ENCODE measurements at regions of chr5 and their contacts with region 1.

Region 1: GRCh38 chr5:160165137-160166068 is 46.2 kb upstream of the PWWP2A start:
- DNase-seq: peak; percentile 86
- H3K4me3 ChIP-seq: no peak overlapping the region
- H3K27ac ChIP-seq: peak overlapping the region; percentile 89
- H3K4me1 ChIP-seq: peaks cover 44% of the 10 kb centered on the region
- H3K27me3 ChIP-seq: no peaks in the 10 kb centered on the region
- CTCF ChIP-seq: no peak
- POLR2A ChIP-seq: peak; percentile 73

Region 2: DNA sequence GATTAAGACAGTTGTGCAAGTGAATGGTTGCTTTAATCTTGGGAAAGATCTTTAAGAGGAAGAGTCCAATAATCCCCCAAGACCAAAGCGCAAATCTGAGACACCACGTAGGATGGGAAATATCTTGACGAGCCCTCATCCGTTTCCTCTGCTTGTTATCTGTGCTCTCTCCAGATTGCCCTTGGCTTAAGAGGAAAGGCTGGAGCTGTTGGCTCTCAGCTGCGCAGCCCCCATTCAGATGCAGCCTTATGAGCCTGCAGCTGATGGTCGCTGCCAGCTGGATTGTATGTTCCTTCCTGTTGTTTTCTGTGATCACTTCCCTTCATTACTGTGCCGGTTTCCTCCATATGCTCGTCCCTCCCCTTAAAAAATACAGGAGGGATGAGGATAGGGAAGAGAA is 93.9 kb before region 1 on chr5:
- CTCF ChIA-PET with region 1: interaction called, 5 read pairs
- POLR2A ChIA-PET with region 1: interaction called, 10 read pairs
- dilution Hi-C with region 1: no loop called
- intact Hi-C with region 1: no loop called
- DNase-seq: no peak
- H3K4me3 ChIP-seq: no peak overlapping the region
- H3K27ac ChIP-seq: peak overlapping the region; percentile 31
- H3K4me1 ChIP-seq: peaks cover 23% of the 10 kb centered on the region
- H3K27me3 ChIP-seq: no peaks in the 10 kb centered on the region
- CTCF ChIP-seq: no peak
- POLR2A ChIP-seq: no peak

Region 3: DNA sequence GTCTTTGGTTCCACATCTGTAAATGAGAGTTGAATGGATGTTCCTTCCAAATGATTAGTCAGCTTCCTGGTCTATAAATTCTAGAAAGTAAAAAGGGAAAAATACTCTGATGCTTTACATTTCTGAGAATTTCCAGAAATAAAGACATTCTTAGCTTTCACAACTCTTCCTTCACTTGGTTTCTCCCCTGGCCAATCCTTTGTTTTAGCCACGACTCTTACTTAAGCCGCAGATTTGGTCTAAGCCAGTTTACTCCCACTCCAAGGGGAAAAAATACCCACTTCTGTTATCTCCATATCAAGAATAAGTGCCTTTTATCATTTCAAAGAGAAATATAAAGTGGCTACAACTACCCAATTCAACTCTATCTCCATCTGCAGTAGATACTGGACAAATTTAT is 75.9 kb before region 1 on chr5:
- CTCF ChIA-PET with region 1: no interaction called
- POLR2A ChIA-PET with region 1: no interaction called
- dilution Hi-C with region 1: no loop called
- intact Hi-C with region 1: loop called (anchors 1 kb)
- DNase-seq: no peak
- H3K4me3 ChIP-seq: no peak overlapping the region
- H3K27ac ChIP-seq: peak overlapping the region; percentile 5
- H3K4me1 ChIP-seq: peaks cover 17% of the 10 kb centered on the region
- H3K27me3 ChIP-seq: no peaks in the 10 kb centered on the region
- CTCF ChIP-seq: no peak
- POLR2A ChIP-seq: no peak

Region 4: DNA sequence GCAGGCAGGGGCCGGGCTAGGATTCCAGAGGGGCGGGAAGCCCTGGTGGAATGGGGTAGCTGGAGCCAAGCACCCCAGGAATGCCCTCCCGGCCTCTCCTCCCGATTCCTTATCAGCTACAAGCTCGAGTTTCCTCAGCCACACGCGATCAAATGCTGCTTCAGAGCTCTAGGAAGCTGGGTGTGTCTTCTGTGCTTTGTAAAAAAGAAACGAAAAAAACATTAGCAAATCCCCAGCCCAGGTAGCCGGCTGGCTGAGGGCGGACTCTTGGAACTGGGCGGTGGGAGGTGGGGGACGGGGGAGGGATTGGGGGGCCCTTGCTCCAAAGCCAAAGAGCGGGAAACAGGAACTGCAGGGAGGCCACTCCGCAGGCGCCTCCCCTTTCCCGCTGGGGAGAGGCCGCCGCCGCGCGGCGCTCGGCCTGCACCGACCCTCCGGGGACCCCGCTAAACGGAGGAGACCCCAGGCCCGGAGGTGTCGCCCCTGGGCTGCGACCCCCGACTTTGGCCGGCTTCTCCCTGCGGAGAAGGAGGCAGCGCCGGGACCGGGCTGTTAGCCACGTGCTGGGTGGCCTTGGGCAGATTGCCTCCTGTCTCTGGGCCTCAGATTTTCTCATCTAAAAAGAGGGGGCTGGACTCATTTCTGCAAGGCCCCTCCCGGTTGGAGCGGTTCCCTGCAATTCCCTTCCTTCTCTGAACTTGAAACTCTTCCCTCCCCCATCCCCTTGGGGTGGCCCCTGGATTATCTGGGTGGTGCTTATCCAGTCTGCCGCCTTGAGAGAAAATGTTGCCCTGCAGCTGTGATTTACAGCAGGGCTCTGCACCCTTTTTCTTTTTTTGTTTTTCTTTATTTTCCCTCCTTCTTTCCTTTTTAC is 23.0 kb after region 1 on chr5:
- CTCF ChIA-PET with region 1: interaction called, 7 read pairs
- POLR2A ChIA-PET with region 1: interaction called, 4 read pairs
- dilution Hi-C with region 1: no loop called
- intact Hi-C with region 1: loop called (anchors 1 kb)
- DNase-seq: peak; percentile 32
- H3K4me3 ChIP-seq: peak overlapping the region; percentile 5 to 47 (median 33)
- H3K27ac ChIP-seq: peak overlapping the region; percentile 44
- H3K4me1 ChIP-seq: peaks cover 8% of the 10 kb centered on the region
- H3K27me3 ChIP-seq: no peaks in the 10 kb centered on the region
- CTCF ChIP-seq: peak in 1 of 2 donors; percentile 3
- POLR2A ChIP-seq: no peak

Region 5: DNA sequence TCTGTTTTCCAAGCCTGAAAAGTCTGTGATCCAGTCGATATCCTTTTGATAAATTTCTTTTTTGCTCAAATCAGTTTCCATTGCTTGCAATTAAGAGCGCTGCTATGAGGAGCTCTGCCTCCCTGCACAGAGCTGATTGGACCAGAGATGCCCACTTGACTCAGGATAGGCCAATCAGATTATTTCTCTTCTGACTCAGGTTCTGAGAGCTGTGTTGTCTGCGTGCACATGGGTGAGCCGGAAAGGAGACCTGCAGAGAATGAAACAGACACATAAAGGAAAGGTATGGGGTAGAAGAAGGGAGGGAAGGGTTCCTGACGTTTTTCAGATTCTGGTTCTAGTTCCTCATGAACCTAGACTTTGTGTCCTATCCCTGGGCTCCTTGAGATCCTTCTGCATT is 48.1 kb after region 1 on chr5:
- CTCF ChIA-PET with region 1: no interaction called
- POLR2A ChIA-PET with region 1: no interaction called
- dilution Hi-C with region 1: no loop called
- intact Hi-C with region 1: no loop called
- DNase-seq: no peak
- H3K4me3 ChIP-seq: no peak overlapping the region
- H3K27ac ChIP-seq: no peak overlapping the region
- H3K4me1 ChIP-seq: no peaks in the 10 kb centered on the region
- H3K27me3 ChIP-seq: no peaks in the 10 kb centered on the region
- CTCF ChIP-seq: no peak
- POLR2A ChIP-seq: no peak